Activated CD4-positive, alpha-beta memory T cell treated with anti-CD3 and anti-CD28 coated beads, Interleukin-2, amount 10 ng/mL, durations not matched to agents 7 days and 5 days (primary cell): ENCODE measurements at regions of chr6 and their contacts with region 1.

Region 1: DNA sequence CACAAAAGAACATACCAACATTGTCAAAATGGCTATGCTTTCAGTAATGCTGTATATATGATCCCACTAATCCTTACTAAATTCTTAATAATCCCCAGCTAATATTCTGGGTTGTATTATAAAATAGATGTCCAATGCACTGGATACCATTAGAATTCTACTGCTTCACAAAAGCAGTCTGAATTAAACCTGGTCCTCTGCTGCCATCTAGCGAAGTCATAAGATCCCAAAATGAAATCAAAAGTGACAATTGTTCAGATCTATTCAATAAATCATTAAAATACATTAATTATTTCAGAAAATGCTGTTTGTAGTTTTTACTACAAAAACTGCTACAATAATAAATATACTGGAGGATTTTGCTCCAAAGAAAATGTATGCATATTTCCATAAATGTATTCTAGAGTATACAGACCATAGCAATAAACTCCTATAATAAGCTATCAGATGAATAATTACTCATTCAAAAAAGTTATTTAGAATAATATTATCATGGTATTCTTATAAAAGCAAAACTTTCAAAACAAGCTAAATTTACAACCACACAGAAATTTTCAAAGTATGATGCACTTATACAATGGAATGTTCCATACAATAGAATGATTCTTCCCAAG is 92.6 kb downstream of the RNGTT start:
- DNase-seq: peak; percentile 35
- H3K4me3 Mint-ChIP-seq: no peak overlapping the region
- H3K27ac Mint-ChIP-seq: no peak overlapping the region
- H3K4me1 Mint-ChIP-seq: peaks cover 12% of the 10 kb centered on the region
- H3K27me3 Mint-ChIP-seq: no peaks in the 10 kb centered on the region

Region 2: DNA sequence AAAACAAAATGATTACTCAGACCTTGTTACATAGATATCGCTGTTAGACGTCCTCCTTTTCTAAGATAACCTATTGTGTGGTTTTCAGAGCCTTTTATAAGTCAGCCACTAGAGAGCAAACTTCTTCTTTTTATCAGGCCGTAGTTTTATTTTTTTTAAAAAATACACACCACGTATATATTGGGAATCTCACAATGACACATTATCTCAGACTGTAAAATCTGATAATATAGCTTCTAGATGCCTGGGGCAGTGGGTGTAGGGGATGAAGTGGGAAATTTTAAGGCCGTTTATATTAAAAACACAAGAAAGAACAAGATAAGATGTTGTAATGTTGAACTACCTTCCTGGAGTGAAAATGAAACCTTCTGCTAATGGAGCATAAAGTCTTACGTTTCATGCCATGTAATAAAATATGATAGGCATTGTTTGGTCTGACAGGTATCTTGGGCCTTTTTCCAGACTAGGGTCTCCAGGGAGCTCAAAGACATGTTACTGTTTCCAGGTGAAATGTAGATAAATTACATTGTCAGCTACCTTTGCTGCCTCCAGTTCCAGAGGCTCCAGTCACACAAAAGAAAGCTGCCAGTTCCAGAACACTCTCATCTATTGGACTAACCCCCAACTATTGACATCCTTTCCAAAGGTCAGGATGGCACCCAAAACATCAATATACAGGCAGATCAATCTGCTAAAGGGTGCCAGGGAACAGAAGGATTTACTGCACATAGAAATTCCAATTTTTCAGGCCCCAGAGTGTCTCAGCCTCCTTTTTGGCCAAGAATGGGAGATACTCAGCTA is 1038.6 kb before region 1 on chr6:
- CTCF ChIA-PET with region 1: interaction called, 11 read pairs
- POLR2A ChIA-PET with region 1: no interaction called
- DNase-seq: no peak
- H3K4me3 Mint-ChIP-seq: peak overlapping the region; percentile 81
- H3K27ac Mint-ChIP-seq: peak overlapping the region; percentile 45
- H3K4me1 Mint-ChIP-seq: peaks cover 11% of the 10 kb centered on the region
- H3K27me3 Mint-ChIP-seq: peaks cover 4% of the 10 kb centered on the region

Region 3: DNA sequence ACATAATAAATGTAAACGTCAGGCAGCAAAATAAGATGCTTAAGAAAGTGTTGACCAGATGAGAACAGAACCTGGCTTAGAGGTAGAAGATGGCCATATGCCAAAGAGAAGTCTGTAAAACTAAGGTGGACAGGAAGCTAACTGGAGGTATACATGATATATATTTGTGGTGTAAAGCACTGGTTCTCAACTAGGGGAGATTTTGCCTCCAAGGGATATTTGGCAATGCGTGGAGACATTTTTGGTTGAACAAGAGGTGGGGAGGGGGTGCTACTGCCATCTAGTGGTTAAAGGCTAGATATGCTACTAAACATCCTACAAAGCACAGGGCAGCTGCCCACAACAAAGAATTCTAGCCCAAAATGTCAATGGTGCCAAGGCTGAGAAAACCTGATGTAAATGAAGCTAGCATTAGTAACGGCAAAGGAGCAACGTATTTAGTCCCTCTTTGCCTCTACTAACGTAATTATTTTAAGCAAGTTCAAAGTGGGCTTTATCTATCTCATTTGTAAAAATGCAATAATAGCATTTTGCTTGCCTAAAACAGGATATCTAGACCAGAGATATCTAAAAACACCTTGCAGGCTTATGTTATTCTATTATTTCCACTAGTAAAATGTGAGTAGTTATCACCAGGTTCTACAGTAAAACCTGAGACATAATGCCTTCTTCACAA is 90.0 kb before region 1 on chr6:
- CTCF ChIA-PET with region 1: interaction called, 11 read pairs
- POLR2A ChIA-PET with region 1: no interaction called
- DNase-seq: peak; percentile 51
- H3K4me3 Mint-ChIP-seq: no peak overlapping the region
- H3K27ac Mint-ChIP-seq: no peak overlapping the region
- H3K4me1 Mint-ChIP-seq: peaks cover 4% of the 10 kb centered on the region
- H3K27me3 Mint-ChIP-seq: no peaks in the 10 kb centered on the region

Region 4: GRCh38 chr6:88823998-88824397 is 46.8 kb before region 1 on chr6:
- CTCF ChIA-PET with region 1: no interaction called
- POLR2A ChIA-PET with region 1: no interaction called
- DNase-seq: no peak
- H3K4me3 Mint-ChIP-seq: no peak overlapping the region
- H3K27ac Mint-ChIP-seq: no peak overlapping the region
- H3K4me1 Mint-ChIP-seq: no peaks in the 10 kb centered on the region
- H3K27me3 Mint-ChIP-seq: no peaks in the 10 kb centered on the region